ENCODE measurements at regions of chr1 and their contacts with region 1.

Region 1: DNA sequence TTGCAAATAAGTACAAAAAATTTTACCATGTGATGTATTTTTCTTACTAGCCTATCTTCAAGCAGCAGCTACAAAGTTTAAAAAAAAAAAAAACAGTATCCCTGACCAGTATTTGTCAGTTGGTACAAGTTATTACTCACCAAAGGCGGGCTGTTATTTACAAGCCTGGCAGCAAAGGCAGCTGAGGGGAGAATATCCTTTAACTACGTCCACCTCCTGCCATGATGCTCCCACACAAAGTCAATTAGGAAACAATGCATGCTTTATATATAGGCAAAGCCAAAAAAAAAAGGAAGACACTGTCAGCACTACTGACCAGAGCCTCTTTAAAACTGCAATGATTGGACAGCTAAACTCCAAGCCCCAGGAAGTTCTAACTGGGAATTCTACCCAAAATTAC is 13.7 kb downstream of the PSMA5 start:
- DNase-seq: no peak
- ATAC-seq: no peak
- H3K4me3 ChIP-seq: no peak overlapping the region
- H3K27ac ChIP-seq: no peak overlapping the region
- H3K4me1 ChIP-seq: no peaks in the 10 kb centered on the region
- H3K27me3 ChIP-seq: no peaks in the 10 kb centered on the region
- CTCF ChIP-seq: no peak
- EP300 ChIP-seq: no peak
- POLR2A ChIP-seq: no peak
- RAD21 ChIP-seq: no peak

Region 2: GRCh38 chr1:109426278-109427170 is 14.0 kb after region 1 on chr1 and contains the start of gene PSMA5:
- CTCF ChIA-PET with region 1: no interaction called
- POLR2A ChIA-PET with region 1: interaction called, 25 read pairs
- in situ Hi-C with region 1: no loop called
- intact Hi-C with region 1: no loop called
- DNase-seq: peak; percentile 98 to 100 (median 99)
- ATAC-seq: peak; percentile 98
- H3K4me3 ChIP-seq: peak within 1 kb of the TSS; percentile 60
- H3K27ac ChIP-seq: peak within 1 kb of the TSS; percentile 87
- H3K4me1 ChIP-seq: peaks cover 18 to 23% of the 10 kb centered on the region in 2 experiments; a peak in 4 of 5 replicates
- H3K27me3 ChIP-seq: no peaks in the 10 kb centered on the region
- CTCF ChIP-seq: no peak
- EP300 ChIP-seq: no peak
- POLR2A ChIP-seq: peak; percentile 99
- RAD21 ChIP-seq: no peak
- polyA plus RNA-seq, gene PSMA5: 451 to 542 TPM

Measured in K562 (cell line).